ENCODE measurements at regions of chr19 and their contacts with region 1.

Region 1: GRCh38 chr19:771332-771785 is 20.4 kb downstream of the MISP start:
- DNase-seq: no peak
- ATAC-seq: no peak
- H3K4me3 Mint-ChIP-seq: no peak overlapping the region
- H3K27ac Mint-ChIP-seq: no peak overlapping the region
- H3K4me1 Mint-ChIP-seq: no peaks in the 10 kb centered on the region
- H3K27me3 Mint-ChIP-seq: no peaks in the 10 kb centered on the region; the same call in 1 of the 2 replicates
- CTCF ChIP-seq: no peak

Region 2: GRCh38 chr19:488505-489417 is 282.6 kb before region 1 on chr19:
- CTCF ChIA-PET with region 1: no interaction called
- POLR2A ChIA-PET with region 1: interaction called, 10 read pairs
- DNase-seq: peak; percentile 94
- ATAC-seq: peak; percentile 83
- H3K4me3 Mint-ChIP-seq: peak overlapping the region; percentile 78
- H3K27ac Mint-ChIP-seq: no peak overlapping the region
- H3K4me1 Mint-ChIP-seq: peaks cover 26% of the 10 kb centered on the region
- H3K27me3 Mint-ChIP-seq: peaks cover 15% of the 10 kb centered on the region
- CTCF ChIP-seq: no peak